CD8-positive, alpha-beta T cell (primary cell): ENCODE measurements at regions of chr6 and their contacts with region 1.

Region 1: DNA sequence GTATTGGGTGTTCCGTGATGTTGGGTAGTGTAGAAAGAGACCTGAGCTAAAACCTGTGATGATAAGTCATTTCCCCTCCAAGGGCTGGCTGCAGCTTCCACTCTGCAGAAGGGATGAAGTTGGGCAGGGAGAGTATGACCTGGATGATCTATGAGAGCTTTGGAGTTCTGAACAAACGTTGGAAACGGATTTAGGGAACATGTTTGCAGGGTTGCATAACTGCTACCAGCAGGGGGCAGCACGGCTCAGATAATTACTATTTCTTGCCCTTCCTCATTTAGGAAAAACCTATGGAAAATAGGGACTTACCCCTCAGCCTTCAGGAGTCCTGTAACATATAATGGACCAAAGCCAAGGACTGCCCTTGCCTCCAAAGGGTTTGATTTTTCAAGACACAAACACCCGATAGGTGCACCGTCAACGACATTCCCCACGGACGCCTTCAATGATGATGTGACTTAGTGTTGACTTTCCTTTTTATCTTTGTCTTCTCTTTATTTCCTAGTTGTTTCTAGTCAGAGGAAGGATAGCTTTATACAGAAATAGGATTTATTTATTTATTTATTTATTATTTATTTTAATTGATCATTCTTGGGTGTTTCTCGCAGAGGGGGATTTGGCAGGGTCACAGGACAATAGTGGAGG is 164.9 kb upstream of the SASH1 start:
- DNase-seq: peak in 3 of 9 experiments; percentile 23 to 32 (median 28)
- ATAC-seq: no peak
- H3K4me3 ChIP-seq: no peak overlapping the region
- H3K4me3 Mint-ChIP-seq: no peak overlapping the region
- H3K27ac ChIP-seq: no peak overlapping the region
- H3K27ac Mint-ChIP-seq: no peak overlapping the region
- H3K4me1 ChIP-seq: no peaks in the 10 kb centered on the region
- H3K4me1 Mint-ChIP-seq: no peaks in the 10 kb centered on the region
- H3K27me3 ChIP-seq: no peaks in the 10 kb centered on the region
- H3K27me3 Mint-ChIP-seq: peaks cover 14% of the 10 kb centered on the region
- CTCF ChIP-seq: peak; percentile 49

Region 2: GRCh38 chr6:148250975-148251685 is 73.4 kb after region 1 on chr6:
- CTCF ChIA-PET with region 1: interaction called, 4 read pairs
- POLR2A ChIA-PET with region 1: no interaction called
- intact Hi-C with region 1: loop called (anchors 1 to 5 kb)
- DNase-seq: peak in 2 of 9 experiments; percentile 27 to 50
- ATAC-seq: no peak
- H3K4me3 ChIP-seq: no peak overlapping the region
- H3K4me3 Mint-ChIP-seq: no peak overlapping the region
- H3K27ac ChIP-seq: no peak overlapping the region
- H3K27ac Mint-ChIP-seq: no peak overlapping the region
- H3K4me1 ChIP-seq: no peaks in the 10 kb centered on the region
- H3K4me1 Mint-ChIP-seq: no peaks in the 10 kb centered on the region
- H3K27me3 ChIP-seq: no peaks in the 10 kb centered on the region
- H3K27me3 Mint-ChIP-seq: peaks cover 3% of the 10 kb centered on the region
- CTCF ChIP-seq: no peak